T-cell (primary cell): ENCODE measurements at regions of chr19 and their contacts with region 1.

Region 1: DNA sequence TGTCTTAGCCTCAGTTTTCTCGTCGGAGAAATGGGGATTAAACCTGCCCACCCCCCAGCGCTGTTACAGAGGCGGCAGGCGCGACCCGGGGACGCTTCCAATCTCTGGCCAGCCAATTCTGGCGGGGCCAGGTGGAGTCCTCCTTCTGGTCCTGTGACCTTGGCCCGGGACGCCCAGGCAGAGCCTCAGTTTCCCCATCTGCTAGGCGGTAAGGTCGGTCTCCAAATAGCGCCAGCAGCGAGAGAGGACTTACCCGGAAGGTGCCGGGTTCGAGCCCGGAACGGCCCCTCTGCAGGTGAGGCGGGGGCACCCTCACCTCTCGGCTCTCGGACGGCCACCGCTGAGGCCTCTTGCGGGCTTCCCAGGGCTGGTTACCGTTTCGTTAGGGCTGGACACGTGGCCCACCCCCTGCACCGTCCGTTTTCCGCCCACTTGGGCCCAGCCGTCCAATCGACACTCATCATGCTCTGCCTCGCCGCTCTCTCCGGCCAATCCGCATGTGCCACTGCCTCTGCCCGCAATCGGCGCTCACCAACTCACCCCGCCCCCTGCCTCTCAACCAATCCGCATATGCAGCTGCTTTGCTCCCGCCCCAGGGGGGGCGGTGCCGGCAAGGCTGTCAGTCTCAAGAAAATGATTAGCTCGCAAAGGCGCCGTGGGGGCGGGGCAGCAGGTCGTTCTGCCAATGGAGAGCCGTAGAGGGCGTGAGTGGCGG is at the start of gene ISOC2:
- DNase-seq: peak; percentile 99 to 100 (median 100)
- ATAC-seq: peak; percentile 96 to 98 (median 97)
- H3K4me3 ChIP-seq: peak within 1 kb of the TSS; percentile 84 to 94
- H3K4me3 Mint-ChIP-seq: peak within 1 kb of the TSS; percentile 85 to 88 (median 87)
- H3K27ac ChIP-seq: peak within 1 kb of the TSS; percentile 70
- H3K27ac Mint-ChIP-seq: peak within 1 kb of the TSS; percentile 77 to 93
- H3K4me1 ChIP-seq: peaks cover 0 to 19% of the 10 kb centered on the region in 2 experiments
- H3K4me1 Mint-ChIP-seq: peaks cover 20 to 30% (median 25%) of the 10 kb centered on the region in 3 donors
- H3K27me3 ChIP-seq: peaks cover 0 to 4% of the 10 kb centered on the region in 2 experiments
- H3K27me3 Mint-ChIP-seq: no peaks in the 10 kb centered on the region
- total RNA-seq, gene ISOC2: 6.8 to 18.9 (median 14.7) TPM

Region 2: DNA sequence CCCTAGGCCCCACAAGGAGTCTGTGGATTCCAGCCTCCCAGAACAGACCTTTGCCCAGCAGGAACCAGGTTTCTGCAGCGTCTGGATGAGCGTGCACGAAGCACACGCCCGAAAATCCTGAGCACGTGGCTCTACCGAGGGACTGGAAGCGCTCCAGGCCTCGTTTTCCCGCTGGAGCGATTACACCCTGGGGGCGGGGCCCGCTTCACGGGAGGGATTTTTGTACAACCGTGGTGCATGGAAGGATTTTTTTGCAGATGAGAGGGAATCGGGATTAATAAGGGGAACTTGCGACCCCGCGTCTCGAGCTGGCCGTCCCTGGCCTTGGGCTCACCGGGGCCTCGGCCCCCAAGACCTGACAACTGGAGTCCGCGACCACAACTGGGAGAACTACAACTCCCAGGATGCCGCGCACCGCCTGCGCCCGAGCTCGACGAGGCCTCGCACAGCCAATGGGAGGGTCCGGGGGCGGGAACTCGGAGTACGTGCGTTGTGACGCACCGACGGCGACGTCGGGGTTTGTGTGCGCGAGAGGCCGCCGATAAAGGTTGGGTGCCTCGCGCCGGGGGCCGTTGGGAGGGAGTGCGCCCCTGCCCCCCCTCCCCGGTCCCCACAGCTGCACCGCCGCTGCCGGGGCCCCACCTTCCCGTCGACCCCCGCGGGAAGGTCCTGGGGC is 14.8 kb after region 1 on chr19 and contains the start of gene ZNF628:
- CTCF ChIA-PET with region 1: interaction called in 1 of 2 experiments, 14 read pairs
- POLR2A ChIA-PET with region 1: interaction called, 3 to 6 read pairs
- DNase-seq: peak; percentile 96 to 99 (median 98)
- ATAC-seq: peak; percentile 95
- H3K4me3 ChIP-seq: peak within 1 kb of the TSS; percentile 53 to 90
- H3K4me3 Mint-ChIP-seq: peak within 1 kb of the TSS; percentile 82 to 86 (median 86)
- H3K27ac ChIP-seq: peak within 1 kb of the TSS; percentile 66
- H3K27ac Mint-ChIP-seq: peak within 1 kb of the TSS; percentile 91 to 94
- H3K4me1 ChIP-seq: peaks cover 2 to 24% of the 10 kb centered on the region in 2 experiments
- H3K4me1 Mint-ChIP-seq: peaks cover 26 to 34% (median 28%) of the 10 kb centered on the region in 3 donors
- H3K27me3 ChIP-seq: peaks cover 0 to 10% of the 10 kb centered on the region in 2 experiments
- H3K27me3 Mint-ChIP-seq: no peaks in the 10 kb centered on the region
- total RNA-seq, gene ZNF628: 14.2 to 24.1 (median 16.2) TPM